K562 (cell line): ENCODE measurements at regions of chr14 and their contacts with region 1.

Region 1: DNA sequence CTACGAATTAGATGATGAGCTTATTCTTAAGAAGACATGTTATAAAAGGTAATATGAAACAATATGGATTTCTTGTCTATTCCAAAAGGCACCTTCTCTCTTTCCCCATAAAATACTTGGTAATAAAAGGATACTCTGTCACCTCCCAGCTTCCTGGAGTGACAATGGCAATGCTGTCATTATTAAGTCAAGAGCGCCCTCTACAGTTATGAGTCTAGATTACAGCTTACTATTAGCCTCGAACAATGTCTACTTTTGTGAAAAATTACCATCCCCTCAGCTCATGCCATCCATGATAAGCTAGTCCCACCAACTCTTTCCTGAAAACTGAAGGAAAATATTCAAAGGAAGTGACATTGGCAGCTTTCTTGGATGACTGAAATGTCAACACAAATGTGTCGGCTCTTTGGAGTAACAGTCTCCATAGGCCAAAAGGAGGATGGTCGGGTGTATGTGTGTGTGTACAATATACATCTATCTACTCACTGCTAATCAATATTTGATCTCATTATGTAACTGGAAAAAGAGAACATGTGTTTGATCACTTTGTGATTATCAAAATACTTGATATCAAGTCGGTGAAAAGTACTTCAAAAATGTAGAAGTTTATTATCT is 48.7 kb upstream of the CDKN3 start:
- DNase-seq: peak; percentile 47 to 65 (median 51)
- ATAC-seq: peak; percentile 75
- H3K4me3 ChIP-seq: no peak overlapping the region
- H3K27ac ChIP-seq: no peak overlapping the region
- H3K4me1 ChIP-seq: peaks cover 0 to 5% of the 10 kb centered on the region in 2 experiments; a peak in 4 of 5 replicates
- H3K27me3 ChIP-seq: peaks cover 4 to 5% of the 10 kb centered on the region in 2 experiments; a peak in 2 of 5 replicates
- CTCF ChIP-seq: peak; percentile 68 to 79 (median 73)
- EP300 ChIP-seq: no peak
- POLR2A ChIP-seq: no peak
- RAD21 ChIP-seq: peak; percentile 75 to 84

Region 2: DNA sequence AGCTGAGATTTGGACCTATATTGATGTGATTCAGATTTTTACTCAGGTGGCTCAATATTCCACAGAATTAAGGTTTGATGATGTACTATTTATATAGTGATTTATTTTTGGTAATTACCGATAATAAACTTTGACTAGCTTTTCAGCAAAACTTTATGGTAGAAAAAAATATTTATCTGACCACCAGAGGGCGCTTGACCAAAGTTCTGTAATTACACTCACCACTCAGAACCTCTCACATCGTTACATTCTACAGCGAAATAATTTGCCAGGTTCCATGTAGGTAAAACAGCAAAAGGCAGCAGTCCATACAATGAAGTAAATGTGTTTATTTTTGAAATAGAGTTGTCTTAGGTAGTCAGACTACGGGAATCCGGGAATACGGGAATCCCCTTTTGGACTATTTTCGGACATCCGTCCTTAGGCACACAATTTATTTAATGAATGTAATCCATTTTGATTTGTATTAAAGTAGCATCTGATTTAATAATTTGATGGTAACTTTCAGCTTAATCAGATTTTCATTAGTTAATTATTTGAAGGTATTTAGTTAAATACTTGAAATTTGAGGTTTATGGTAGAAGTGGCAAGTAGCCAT is 1052.0 kb before region 1 on chr14:
- CTCF ChIA-PET with region 1: no interaction called
- POLR2A ChIA-PET with region 1: no interaction called
- in situ Hi-C with region 1: no loop called
- intact Hi-C with region 1: loop called (anchors 5 kb)
- DNase-seq: peak; percentile 15 to 48 (median 28)
- ATAC-seq: peak; percentile 42; the same call in 1 of the 3 replicates
- H3K4me3 ChIP-seq: no peak overlapping the region
- H3K27ac ChIP-seq: no peak overlapping the region
- H3K4me1 ChIP-seq: no peaks in the 10 kb centered on the region
- H3K27me3 ChIP-seq: no peaks in the 10 kb centered on the region
- CTCF ChIP-seq: peak; percentile 15 to 52 (median 29); a peak in 3 of 6 replicates
- EP300 ChIP-seq: no peak
- POLR2A ChIP-seq: no peak
- RAD21 ChIP-seq: peak in 1 of 2 experiments; percentile 26; a peak in 3 of 4 replicates

Region 3: DNA sequence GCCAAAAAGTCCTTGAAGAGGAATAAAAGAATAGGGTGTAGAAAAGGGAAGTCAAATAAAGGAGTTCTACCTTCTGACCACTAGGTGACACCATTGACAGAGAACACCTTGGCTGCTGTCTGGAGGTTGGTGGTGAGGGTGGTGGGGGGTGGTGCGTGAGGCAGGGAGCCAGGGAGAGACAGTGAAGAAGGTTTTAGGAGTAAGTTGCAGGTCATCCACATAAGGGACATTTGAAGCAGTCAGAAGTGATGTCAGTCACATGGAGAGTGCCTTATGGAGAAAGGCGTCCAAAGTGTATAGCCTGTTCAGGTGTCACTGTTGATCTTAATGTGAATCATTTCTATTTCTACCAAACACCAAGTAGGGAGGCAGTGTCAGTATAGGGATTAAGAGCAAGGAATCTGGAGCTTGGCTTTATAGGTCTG is 915.7 kb before region 1 on chr14:
- CTCF ChIA-PET with region 1: no interaction called
- POLR2A ChIA-PET with region 1: no interaction called
- in situ Hi-C with region 1: no loop called
- intact Hi-C with region 1: loop called (anchors 5 kb)
- DNase-seq: peak; percentile 1 to 8 (median 6)
- ATAC-seq: no peak
- H3K4me3 ChIP-seq: no peak overlapping the region
- H3K27ac ChIP-seq: no peak overlapping the region
- H3K4me1 ChIP-seq: no peaks in the 10 kb centered on the region
- H3K27me3 ChIP-seq: no peaks in the 10 kb centered on the region
- CTCF ChIP-seq: no peak; a peak in 1 of 6 replicates
- EP300 ChIP-seq: no peak
- POLR2A ChIP-seq: no peak
- RAD21 ChIP-seq: peak in 1 of 2 experiments; percentile 36; a peak in 2 of 4 replicates

Region 4: GRCh38 chr14:54309615-54310014 is 38.5 kb before region 1 on chr14:
- CTCF ChIA-PET with region 1: interaction called, 3 read pairs
- POLR2A ChIA-PET with region 1: interaction called, 3 read pairs
- in situ Hi-C with region 1: no loop called
- intact Hi-C with region 1: loop called (anchors 5 kb)
- DNase-seq: no peak
- ATAC-seq: no peak
- H3K4me3 ChIP-seq: no peak overlapping the region
- H3K27ac ChIP-seq: no peak overlapping the region
- H3K4me1 ChIP-seq: no peaks in the 10 kb centered on the region
- H3K27me3 ChIP-seq: no peaks in the 10 kb centered on the region; a peak in 1 of 5 replicates
- CTCF ChIP-seq: no peak
- EP300 ChIP-seq: no peak
- POLR2A ChIP-seq: no peak
- RAD21 ChIP-seq: no peak

Region 5: GRCh38 chr14:54396493-54397335 is 48.6 kb after region 1 on chr14 and contains the start of gene CDKN3:
- CTCF ChIA-PET with region 1: no interaction called
- POLR2A ChIA-PET with region 1: no interaction called
- in situ Hi-C with region 1: no loop called
- intact Hi-C with region 1: no loop called
- DNase-seq: peak; percentile 91 to 97 (median 94)
- ATAC-seq: peak; percentile 98
- H3K4me3 ChIP-seq: peak within 1 kb of the TSS; percentile 65
- H3K27ac ChIP-seq: peak within 1 kb of the TSS; percentile 86
- H3K4me1 ChIP-seq: peaks cover 15% of the 10 kb centered on the region in 2 experiments; a peak in 4 of 5 replicates
- H3K27me3 ChIP-seq: peaks cover 0 to 7% of the 10 kb centered on the region in 2 experiments; a peak in 2 of 5 replicates
- CTCF ChIP-seq: peak; percentile 32 to 47 (median 33); a peak in 3 of 6 replicates
- EP300 ChIP-seq: no peak
- POLR2A ChIP-seq: peak; percentile 89
- RAD21 ChIP-seq: no peak
- polyA plus RNA-seq, gene CDKN3: 127 to 128 TPM